ENCODE measurements at regions of chr2 and their contacts with region 1.

Region 1: DNA sequence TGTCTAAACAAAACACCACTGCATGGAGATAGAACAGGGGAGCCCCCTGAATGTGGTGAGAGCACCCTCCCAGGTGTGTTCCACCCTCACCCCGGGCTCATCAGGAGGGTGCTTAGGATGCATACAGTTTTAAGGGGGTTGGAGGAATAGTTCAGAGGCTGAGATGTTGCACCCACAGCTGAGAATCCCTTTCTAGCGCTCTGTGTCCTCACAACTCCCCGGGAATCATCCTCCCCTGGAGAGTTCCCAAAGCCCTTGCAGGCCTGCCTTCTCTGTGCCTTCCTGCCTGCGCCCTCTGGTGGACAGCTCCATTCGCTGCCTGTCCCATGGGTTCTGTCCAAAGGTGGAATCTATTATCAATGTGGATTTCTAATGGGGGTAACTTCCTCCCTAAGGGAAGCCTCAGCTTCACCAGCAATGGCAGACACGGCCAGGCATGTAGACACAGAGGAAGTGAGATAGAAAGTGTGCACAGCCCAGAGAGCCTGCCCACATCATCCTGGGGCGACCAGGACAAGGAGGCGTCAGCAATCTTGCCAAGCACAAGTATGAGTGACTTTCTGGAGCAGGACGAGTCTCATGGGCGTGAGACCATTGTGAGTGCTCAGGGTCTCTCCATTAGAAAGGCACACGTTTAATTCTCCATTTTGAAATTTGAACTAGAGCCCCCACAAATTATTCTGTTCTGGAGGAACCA is 1.2 kb upstream of the UGT1A5 start:
- H3K4me3 ChIP-seq: no peak overlapping the region
- H3K27ac ChIP-seq: no peak overlapping the region
- H3K4me1 ChIP-seq: no peaks in the 10 kb centered on the region
- CTCF ChIP-seq: peak; percentile 65

Region 2: GRCh38 chr2:233449081-233449901 is 262.2 kb before region 1 on chr2:
- CTCF ChIA-PET with region 1: interaction called, 11 read pairs
- POLR2A ChIA-PET with region 1: no interaction called
- H3K4me3 ChIP-seq: no peak overlapping the region
- H3K27ac ChIP-seq: no peak overlapping the region
- H3K4me1 ChIP-seq: no peaks in the 10 kb centered on the region
- CTCF ChIP-seq: peak; percentile 73

Region 3: GRCh38 chr2:233572468-233572867 is 139.0 kb before region 1 on chr2:
- CTCF ChIA-PET with region 1: no interaction called
- POLR2A ChIA-PET with region 1: no interaction called
- H3K4me3 ChIP-seq: no peak overlapping the region
- H3K27ac ChIP-seq: no peak overlapping the region
- H3K4me1 ChIP-seq: no peaks in the 10 kb centered on the region
- CTCF ChIP-seq: no peak

Region 4: DNA sequence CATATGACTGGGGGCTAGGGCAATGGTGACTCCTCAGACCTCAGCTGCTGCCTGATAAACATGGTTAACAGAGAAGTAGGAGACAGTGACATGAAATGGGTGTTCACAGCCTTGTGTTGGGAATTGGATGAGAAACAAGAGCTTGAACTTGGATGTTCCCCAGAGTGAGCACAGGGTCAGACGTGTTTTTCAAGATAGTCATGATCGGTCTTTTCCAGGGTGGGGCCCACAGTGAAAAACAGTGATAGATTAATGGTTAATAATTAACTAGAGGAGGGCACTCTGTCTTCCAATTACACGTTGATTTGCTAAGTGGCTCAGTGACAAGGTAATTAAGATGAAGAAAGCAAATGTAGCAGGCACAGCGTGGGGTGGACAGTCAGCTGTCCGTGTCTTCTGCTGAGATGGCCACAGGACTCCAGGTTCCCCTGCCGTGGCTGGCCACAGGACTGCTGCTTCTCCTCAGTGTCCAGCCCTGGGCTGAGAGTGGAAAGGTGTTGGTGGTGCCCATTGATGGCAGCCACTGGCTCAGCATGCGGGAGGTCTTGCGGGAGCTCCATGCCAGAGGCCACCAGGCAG is 17.4 kb after region 1 on chr2 and contains the start of gene UGT1A3:
- CTCF ChIA-PET with region 1: interaction called, 11 read pairs
- POLR2A ChIA-PET with region 1: no interaction called
- H3K4me3 ChIP-seq: no peak within 1 kb of the TSS
- H3K27ac ChIP-seq: no peak within 1 kb of the TSS
- H3K4me1 ChIP-seq: no peaks in the 10 kb centered on the region
- CTCF ChIP-seq: no peak

Region 5: GRCh38 chr2:233801357-233802131 is 90.1 kb after region 1 on chr2:
- CTCF ChIA-PET with region 1: no interaction called
- POLR2A ChIA-PET with region 1: no interaction called
- H3K4me3 ChIP-seq: no peak overlapping the region
- H3K27ac ChIP-seq: no peak overlapping the region
- H3K4me1 ChIP-seq: no peaks in the 10 kb centered on the region
- CTCF ChIP-seq: no peak

Measured in HEK293 (cell line).